PC-3 (cell line): ENCODE measurements at regions of chr10 and their contacts with region 1.

Region 1: DNA sequence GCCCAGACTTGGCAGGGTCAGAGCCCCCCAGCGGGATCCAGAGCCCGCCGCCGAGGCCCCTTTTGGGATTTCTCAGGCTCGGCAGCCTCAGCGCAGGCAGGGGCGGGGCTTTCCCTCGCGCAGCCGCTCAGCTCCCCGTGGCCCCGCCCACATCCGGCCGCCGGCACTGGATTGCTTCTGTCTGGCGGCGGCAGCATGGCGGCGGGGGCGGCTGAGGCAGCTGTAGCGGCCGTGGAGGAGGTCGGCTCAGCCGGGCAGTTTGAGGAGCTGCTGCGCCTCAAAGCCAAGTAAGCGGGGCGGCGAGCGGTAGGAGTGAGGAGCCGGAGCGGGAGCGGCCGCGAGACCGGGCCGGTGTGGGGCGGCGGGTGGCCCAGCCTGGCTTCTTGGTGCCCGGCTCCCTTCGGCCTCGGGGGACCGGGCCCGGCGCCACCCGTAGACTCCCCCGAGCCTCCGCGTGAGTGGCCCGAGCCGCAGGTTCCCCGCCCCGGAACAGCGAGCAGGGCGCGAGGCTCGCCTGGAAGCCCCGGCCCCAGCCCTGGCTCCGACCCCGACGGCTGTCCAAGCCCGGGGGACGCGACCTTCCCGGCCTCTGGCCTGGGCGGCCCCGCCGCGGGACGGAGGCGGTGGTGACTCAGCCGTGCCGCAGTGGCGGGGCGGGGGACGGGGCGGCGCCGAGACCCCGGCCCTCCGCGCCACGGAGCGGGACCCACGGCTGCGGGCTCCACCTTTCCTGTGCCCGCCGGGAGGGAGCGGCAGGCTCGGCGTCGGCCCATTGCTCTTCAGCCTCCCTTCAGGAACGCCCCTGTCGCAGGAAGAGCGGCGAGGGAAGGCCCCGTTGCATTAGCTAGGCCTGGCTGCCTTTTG is at the start of gene GLRX3:
- DNase-seq: peak; percentile 73
- ATAC-seq: peak; percentile 71
- H3K4me3 ChIP-seq: peak within 1 kb of the TSS; percentile 89
- H3K27ac ChIP-seq: peak within 1 kb of the TSS; percentile 86
- H3K4me1 ChIP-seq: peaks cover 14% of the 10 kb centered on the region
- H3K27me3 ChIP-seq: no peaks in the 10 kb centered on the region
- CTCF ChIP-seq: no peak
- total RNA-seq, gene GLRX3: 98.1 and 107 TPM in 2 replicates

Region 2: GRCh38 chr10:129244757-129245156 is 891.7 kb before region 1 on chr10:
- CTCF ChIA-PET with region 1: no interaction called
- POLR2A ChIA-PET with region 1: no interaction called
- intact Hi-C with region 1: no loop called
- DNase-seq: no peak
- ATAC-seq: no peak
- H3K4me3 ChIP-seq: no peak overlapping the region
- H3K27ac ChIP-seq: no peak overlapping the region
- H3K4me1 ChIP-seq: no peaks in the 10 kb centered on the region
- H3K27me3 ChIP-seq: no peaks in the 10 kb centered on the region
- CTCF ChIP-seq: no peak

Region 3: GRCh38 chr10:129853562-129853903 is 282.9 kb before region 1 on chr10:
- CTCF ChIA-PET with region 1: interaction called, 10 read pairs
- POLR2A ChIA-PET with region 1: no interaction called
- intact Hi-C with region 1: no loop called
- DNase-seq: peak; percentile 19
- ATAC-seq: no peak
- H3K4me3 ChIP-seq: no peak overlapping the region
- H3K27ac ChIP-seq: no peak overlapping the region
- H3K4me1 ChIP-seq: no peaks in the 10 kb centered on the region
- H3K27me3 ChIP-seq: peaks cover 64% of the 10 kb centered on the region
- CTCF ChIP-seq: peak; percentile 43

Region 4: GRCh38 chr10:130202984-130203621 is 66.6 kb after region 1 on chr10:
- CTCF ChIA-PET with region 1: no interaction called
- POLR2A ChIA-PET with region 1: no interaction called
- intact Hi-C with region 1: no loop called
- DNase-seq: no peak
- ATAC-seq: no peak
- H3K4me3 ChIP-seq: no peak overlapping the region
- H3K27ac ChIP-seq: no peak overlapping the region
- H3K4me1 ChIP-seq: no peaks in the 10 kb centered on the region
- H3K27me3 ChIP-seq: no peaks in the 10 kb centered on the region
- CTCF ChIP-seq: no peak

Region 5: GRCh38 chr10:131561897-131562296 is 1425.4 kb after region 1 on chr10:
- CTCF ChIA-PET with region 1: no interaction called
- POLR2A ChIA-PET with region 1: no interaction called
- intact Hi-C with region 1: no loop called
- DNase-seq: no peak
- ATAC-seq: no peak
- H3K4me3 ChIP-seq: no peak overlapping the region
- H3K27ac ChIP-seq: no peak overlapping the region
- H3K4me1 ChIP-seq: no peaks in the 10 kb centered on the region
- H3K27me3 ChIP-seq: peaks cover 22% of the 10 kb centered on the region
- CTCF ChIP-seq: no peak